ENCODE measurements at regions of chr2 and their contacts with region 1.

Region 1: GRCh38 chr2:237744613-237745249 is 53.8 kb upstream of the RBM44 start:
- DNase-seq: peak; percentile 61 to 84 (median 74)
- ATAC-seq: peak; percentile 83
- H3K4me3 ChIP-seq: no peak overlapping the region
- H3K4me3 Mint-ChIP-seq: peak overlapping the region in 1 of 10 donors; percentile 14
- H3K27ac ChIP-seq: peak overlapping the region; percentile 44
- H3K27ac Mint-ChIP-seq: peak overlapping the region; percentile 79 to 94 (median 86)
- H3K4me1 ChIP-seq: peaks cover 4 to 8% of the 10 kb centered on the region in 2 donors
- H3K4me1 Mint-ChIP-seq: peaks cover 30 to 55% (median 46%) of the 10 kb centered on the region in 7 donors
- H3K27me3 ChIP-seq: no peaks in the 10 kb centered on the region
- H3K27me3 Mint-ChIP-seq: no peaks in the 10 kb centered on the region

Region 2: GRCh38 chr2:237512774-237513466 is 231.8 kb before region 1 on chr2:
- CTCF ChIA-PET with region 1: interaction called, 8 read pairs
- POLR2A ChIA-PET with region 1: no interaction called
- intact Hi-C with region 1: loop called (anchors 1 to 10 kb)
- DNase-seq: peak; percentile 55 to 76 (median 72)
- ATAC-seq: peak; percentile 85
- H3K4me3 ChIP-seq: no peak overlapping the region
- H3K4me3 Mint-ChIP-seq: no peak overlapping the region
- H3K27ac ChIP-seq: no peak overlapping the region
- H3K27ac Mint-ChIP-seq: no peak overlapping the region
- H3K4me1 ChIP-seq: no peaks in the 10 kb centered on the region
- H3K4me1 Mint-ChIP-seq: no peaks in the 10 kb centered on the region
- H3K27me3 ChIP-seq: no peaks in the 10 kb centered on the region
- H3K27me3 Mint-ChIP-seq: peaks cover 0 to 6% (median 0%) of the 10 kb centered on the region in 5 donors

Region 3: GRCh38 chr2:237581751-237582746 is 162.7 kb before region 1 on chr2:
- CTCF ChIA-PET with region 1: interaction called, 10 read pairs
- POLR2A ChIA-PET with region 1: no interaction called
- intact Hi-C with region 1: loop called (anchors 1 to 2 kb)
- DNase-seq: peak in 7 of 9 donors; percentile 53 to 73 (median 62)
- ATAC-seq: peak; percentile 80
- H3K4me3 ChIP-seq: no peak overlapping the region
- H3K4me3 Mint-ChIP-seq: peak overlapping the region in 1 of 10 donors; percentile 9
- H3K27ac ChIP-seq: no peak overlapping the region
- H3K27ac Mint-ChIP-seq: peak overlapping the region in 6 of 9 donors; percentile 14 to 84 (median 56)
- H3K4me1 ChIP-seq: no peaks in the 10 kb centered on the region
- H3K4me1 Mint-ChIP-seq: peaks cover 0 to 6% (median 4%) of the 10 kb centered on the region in 7 donors
- H3K27me3 ChIP-seq: no peaks in the 10 kb centered on the region
- H3K27me3 Mint-ChIP-seq: peaks cover 0 to 3% (median 0%) of the 10 kb centered on the region in 5 donors

Region 4: DNA sequence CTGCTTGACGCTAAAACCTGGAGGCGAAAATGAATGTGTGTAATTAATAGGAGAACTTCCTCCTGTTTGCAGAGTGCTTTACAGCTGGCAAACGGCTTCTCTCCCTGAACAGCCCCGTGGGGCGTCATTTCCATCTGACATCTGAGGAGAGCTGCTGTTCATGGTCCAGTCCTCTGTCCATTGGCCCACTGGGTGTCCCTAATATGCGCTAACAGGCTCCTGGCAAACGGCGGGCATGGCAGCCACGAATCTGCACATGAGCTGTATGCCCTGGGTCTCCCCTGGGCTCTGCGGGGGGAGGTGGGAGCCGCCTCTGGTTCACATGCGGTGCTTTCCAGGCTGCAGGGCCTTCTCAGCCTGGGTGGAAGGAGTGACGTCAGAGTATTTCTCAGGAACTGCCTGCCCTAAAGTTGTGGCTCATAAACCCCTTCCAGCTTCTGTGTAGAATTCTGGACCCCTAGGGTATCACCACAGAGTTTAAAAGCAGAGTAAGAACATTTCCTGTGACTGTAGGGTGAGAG is 44.2 kb before region 1 on chr2:
- CTCF ChIA-PET with region 1: interaction called, 43 read pairs
- POLR2A ChIA-PET with region 1: interaction called, 3 read pairs
- intact Hi-C with region 1: loop called in 1 of 2 experiments (anchors 2 kb)
- DNase-seq: peak in 5 of 9 donors; percentile 50 to 89 (median 65)
- ATAC-seq: peak; percentile 78
- H3K4me3 ChIP-seq: peak overlapping the region; percentile 23
- H3K4me3 Mint-ChIP-seq: peak overlapping the region; percentile 59 to 91 (median 76)
- H3K27ac ChIP-seq: peak overlapping the region; percentile 76
- H3K27ac Mint-ChIP-seq: peak overlapping the region; percentile 85 to 98 (median 92)
- H3K4me1 ChIP-seq: peaks cover 92 to 95% of the 10 kb centered on the region in 2 donors
- H3K4me1 Mint-ChIP-seq: peaks cover 81 to 99% (median 95%) of the 10 kb centered on the region in 7 donors
- H3K27me3 ChIP-seq: no peaks in the 10 kb centered on the region
- H3K27me3 Mint-ChIP-seq: no peaks in the 10 kb centered on the region

Region 5: GRCh38 chr2:238263204-238264071 is 518.7 kb after region 1 on chr2:
- CTCF ChIA-PET with region 1: interaction called, 5 read pairs
- POLR2A ChIA-PET with region 1: no interaction called
- intact Hi-C with region 1: loop called in 1 of 2 experiments (anchors 5 kb)
- DNase-seq: peak; percentile 55 to 71 (median 67)
- ATAC-seq: peak; percentile 75
- H3K4me3 ChIP-seq: no peak overlapping the region
- H3K4me3 Mint-ChIP-seq: no peak overlapping the region
- H3K27ac ChIP-seq: no peak overlapping the region
- H3K27ac Mint-ChIP-seq: peak overlapping the region in 3 of 9 donors; percentile 57 to 80 (median 68)
- H3K4me1 ChIP-seq: no peaks in the 10 kb centered on the region
- H3K4me1 Mint-ChIP-seq: peaks cover 4 to 23% (median 6%) of the 10 kb centered on the region in 7 donors
- H3K27me3 ChIP-seq: no peaks in the 10 kb centered on the region
- H3K27me3 Mint-ChIP-seq: no peaks in the 10 kb centered on the region

Measured in naive thymus-derived CD4-positive, alpha-beta T cell (primary cell).